Calu3 (cell line): ENCODE measurements at regions of chr10 and their contacts with region 1.

Region 1: GRCh38 chr10:99732033-99732912 is at the starts of genes COX15 and CUTC:
- DNase-seq: peak; percentile 93
- H3K4me3 Mint-ChIP-seq: peak within 1 kb of the TSS; percentile 86
- H3K27ac Mint-ChIP-seq: peak within 1 kb of the TSS; percentile 57
- H3K4me1 Mint-ChIP-seq: peaks cover 16% of the 10 kb centered on the region
- H3K27me3 Mint-ChIP-seq: no peaks in the 10 kb centered on the region
- CTCF ChIP-seq: peak; percentile 37
- total RNA-seq, gene COX15: 35.3 and 41.0 TPM in 2 replicates
- total RNA-seq, gene CUTC: 9.3 and 9.6 TPM in 2 replicates

Region 2: GRCh38 chr10:99782447-99783286 is 50.4 kb after region 1 on chr10 and contains the start of gene ABCC2:
- CTCF ChIA-PET with region 1: no interaction called
- intact Hi-C with region 1: loop called (anchors 2 kb)
- DNase-seq: no peak
- H3K4me3 Mint-ChIP-seq: peak within 1 kb of the TSS; percentile 43
- H3K27ac Mint-ChIP-seq: peak within 1 kb of the TSS; percentile 38
- H3K4me1 Mint-ChIP-seq: peaks cover 76% of the 10 kb centered on the region
- H3K27me3 Mint-ChIP-seq: no peaks in the 10 kb centered on the region
- CTCF ChIP-seq: no peak
- total RNA-seq, gene ABCC2: 1.2 and 1.8 TPM in 2 replicates

Region 3: GRCh38 chr10:99809931-99810615 is 77.8 kb after region 1 on chr10:
- CTCF ChIA-PET with region 1: no interaction called
- intact Hi-C with region 1: no loop called
- DNase-seq: no peak
- H3K4me3 Mint-ChIP-seq: no peak overlapping the region
- H3K27ac Mint-ChIP-seq: no peak overlapping the region
- H3K4me1 Mint-ChIP-seq: no peaks in the 10 kb centered on the region
- H3K27me3 Mint-ChIP-seq: no peaks in the 10 kb centered on the region
- CTCF ChIP-seq: no peak